Mammary epithelial cell (primary cell): ENCODE measurements at regions of chr2 and their contacts with region 1.

Region 1: GRCh38 chr2:199850718-199851500 is at the start of gene FTCDNL1:
- DNase-seq: peak; percentile 26
- H3K4me3 ChIP-seq: peak within 1 kb of the TSS; percentile 55 to 67 (median 65)
- H3K27ac ChIP-seq: no peak within 1 kb of the TSS
- H3K4me1 ChIP-seq: peaks cover 3% of the 10 kb centered on the region
- H3K27me3 ChIP-seq: peaks cover 7% of the 10 kb centered on the region
- CTCF ChIP-seq: peak; percentile 29 to 59
- total RNA-seq, gene FTCDNL1: 0.14 to 1.0 TPM

Region 2: DNA sequence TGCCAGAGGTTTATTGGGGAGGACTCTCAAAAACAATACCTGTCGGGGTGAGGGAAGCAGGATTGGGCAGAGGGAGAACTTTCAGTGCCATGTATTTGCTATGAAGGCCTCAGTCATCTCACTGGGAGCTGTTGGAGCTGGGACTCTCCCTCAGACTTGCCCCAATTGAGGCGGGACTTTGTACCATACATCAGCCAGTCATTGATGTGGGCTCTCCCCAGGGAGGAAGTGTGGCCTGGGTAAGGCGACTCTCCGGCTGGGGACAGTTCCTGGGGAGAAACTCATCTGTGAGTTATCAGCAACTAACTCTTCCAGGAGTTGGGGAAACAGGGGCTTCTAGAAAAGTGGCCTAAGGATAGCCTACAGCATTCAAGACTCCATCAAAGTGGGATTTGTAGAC is 66.4 kb before region 1 on chr2:
- CTCF ChIA-PET with region 1: no interaction called
- dilution Hi-C with region 1: no loop called
- in situ Hi-C with region 1: no loop called
- intact Hi-C with region 1: no loop called
- DNase-seq: no peak
- H3K4me3 ChIP-seq: no peak overlapping the region
- H3K27ac ChIP-seq: no peak overlapping the region
- H3K4me1 ChIP-seq: no peaks in the 10 kb centered on the region
- H3K27me3 ChIP-seq: no peaks in the 10 kb centered on the region
- CTCF ChIP-seq: no peak

Region 3: GRCh38 chr2:199818026-199818425 is 32.9 kb before region 1 on chr2:
- CTCF ChIA-PET with region 1: no interaction called
- dilution Hi-C with region 1: no loop called
- in situ Hi-C with region 1: no loop called
- intact Hi-C with region 1: no loop called
- DNase-seq: no peak
- H3K4me3 ChIP-seq: no peak overlapping the region
- H3K27ac ChIP-seq: no peak overlapping the region
- H3K4me1 ChIP-seq: no peaks in the 10 kb centered on the region
- H3K27me3 ChIP-seq: peaks cover 2% of the 10 kb centered on the region
- CTCF ChIP-seq: no peak

Region 4: GRCh38 chr2:199940373-199940772 is 89.5 kb after region 1 on chr2:
- CTCF ChIA-PET with region 1: no interaction called
- dilution Hi-C with region 1: no loop called
- in situ Hi-C with region 1: no loop called
- intact Hi-C with region 1: loop called (anchors 1 kb)
- DNase-seq: peak; percentile 19
- H3K4me3 ChIP-seq: no peak overlapping the region
- H3K27ac ChIP-seq: no peak overlapping the region
- H3K4me1 ChIP-seq: no peaks in the 10 kb centered on the region
- H3K27me3 ChIP-seq: no peaks in the 10 kb centered on the region
- CTCF ChIP-seq: peak; percentile 10 to 29